Mammary epithelial cell (primary cell): ENCODE measurements at regions of chr17 and their contacts with region 1.

Region 1: DNA sequence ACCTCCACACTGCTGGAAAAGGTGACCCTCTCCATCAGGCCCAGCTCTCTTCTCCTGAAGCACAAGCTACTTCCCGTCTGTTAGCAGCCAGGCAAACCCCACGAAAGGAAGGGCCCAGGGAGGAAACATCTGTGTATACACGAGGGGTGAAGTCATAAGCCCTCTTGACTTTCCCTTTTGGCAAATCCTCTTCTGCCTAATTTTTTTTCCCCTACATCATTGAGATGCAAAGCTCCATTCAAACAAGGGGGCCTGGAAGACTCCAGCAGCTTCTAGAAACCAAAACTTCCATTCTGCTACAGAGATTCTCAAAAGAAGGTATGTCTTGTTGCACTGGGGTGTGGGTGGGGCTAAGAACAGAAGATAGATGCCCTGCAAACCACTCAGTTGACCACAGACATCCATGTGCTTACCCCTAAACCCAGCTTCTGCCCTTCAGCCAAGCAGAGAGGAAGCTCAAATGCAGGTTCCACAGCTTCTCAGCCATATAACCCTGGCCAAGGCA is 145.6 kb upstream of the RCVRN start:
- DNase-seq: no peak
- H3K4me3 ChIP-seq: no peak overlapping the region
- H3K27ac ChIP-seq: no peak overlapping the region
- H3K4me1 ChIP-seq: no peaks in the 10 kb centered on the region
- H3K27me3 ChIP-seq: no peaks in the 10 kb centered on the region
- CTCF ChIP-seq: no peak

Region 2: DNA sequence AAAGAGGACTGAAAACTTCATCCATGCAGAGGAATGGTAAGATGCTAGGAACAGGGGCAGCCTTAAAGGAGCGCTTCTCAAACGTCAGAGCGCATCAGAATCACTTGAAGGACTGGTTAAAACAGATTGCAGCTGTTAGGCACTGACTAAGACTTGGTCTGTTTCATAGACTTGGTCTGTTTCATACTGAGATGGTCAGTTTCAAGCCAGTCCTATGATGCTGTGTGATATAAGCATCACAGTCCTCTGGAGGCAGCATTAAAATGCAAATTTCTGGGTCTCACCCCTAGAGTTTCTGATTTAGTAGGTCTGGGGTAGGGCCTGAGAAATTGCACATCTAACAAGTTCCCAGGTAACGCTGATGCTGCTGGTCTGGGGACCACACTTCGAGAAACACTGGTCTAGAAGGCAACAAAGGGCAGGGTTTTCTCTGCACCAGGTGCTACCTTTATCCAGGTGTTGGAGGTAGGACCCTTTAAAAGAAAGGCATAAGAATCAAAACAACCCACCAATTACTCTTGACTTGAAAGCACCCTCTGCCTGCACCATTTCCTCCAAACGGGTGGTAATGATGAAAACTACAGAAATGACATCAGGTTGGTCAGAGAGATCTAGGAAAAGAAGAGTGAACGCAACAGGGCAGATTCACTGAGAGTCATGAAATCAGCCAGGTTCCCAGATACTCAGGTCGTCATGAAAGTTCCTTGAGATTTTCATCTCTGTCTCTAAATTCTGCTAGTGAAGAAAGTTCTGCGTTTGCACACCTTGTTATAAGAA is 50.5 kb before region 1 on chr17:
- CTCF ChIA-PET with region 1: no interaction called
- dilution Hi-C with region 1: no loop called
- in situ Hi-C with region 1: no loop called
- intact Hi-C with region 1: no loop called
- DNase-seq: no peak
- H3K4me3 ChIP-seq: no peak overlapping the region
- H3K27ac ChIP-seq: no peak overlapping the region
- H3K4me1 ChIP-seq: no peaks in the 10 kb centered on the region
- H3K27me3 ChIP-seq: no peaks in the 10 kb centered on the region
- CTCF ChIP-seq: no peak

Region 3: DNA sequence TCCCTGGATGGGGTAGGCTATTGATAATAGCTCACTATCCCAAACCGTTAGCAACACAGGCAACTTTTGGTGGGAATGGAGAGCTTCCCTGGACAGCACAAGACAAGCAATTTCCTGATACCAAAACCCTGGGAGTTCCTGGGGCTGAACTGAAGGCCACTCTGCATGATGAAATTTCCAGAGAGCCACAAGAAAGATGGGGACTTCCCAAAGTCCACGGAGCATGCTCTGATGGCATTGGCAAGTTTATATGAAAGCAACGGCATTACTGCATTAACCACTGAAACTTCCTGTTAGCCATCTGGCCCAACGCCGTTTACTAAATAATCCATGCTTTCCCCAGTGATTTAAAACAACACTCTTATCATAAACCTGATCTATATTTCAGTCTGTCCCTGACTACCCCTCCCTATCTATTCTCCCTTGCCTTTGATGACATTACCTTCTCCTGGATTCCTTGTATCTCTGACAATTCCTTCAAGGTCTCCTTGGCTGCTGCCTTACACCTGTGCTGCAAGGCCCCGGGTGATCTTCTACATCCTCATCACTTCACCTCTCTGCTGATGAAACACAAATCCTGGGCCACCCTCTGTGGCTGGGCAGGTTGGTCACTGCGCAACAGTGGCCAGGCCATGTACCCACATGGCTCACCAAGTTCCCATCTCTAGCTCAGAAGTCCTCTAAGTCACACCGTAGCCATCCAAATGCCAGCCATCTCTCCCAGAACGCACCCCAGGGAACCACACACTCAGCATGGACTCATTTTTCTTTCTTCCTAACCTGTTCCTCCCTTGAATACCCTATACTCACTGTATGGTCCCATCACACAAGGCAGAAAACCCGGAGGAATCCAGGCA is 37.1 kb before region 1 on chr17:
- CTCF ChIA-PET with region 1: no interaction called
- dilution Hi-C with region 1: loop called (anchors 5 kb)
- in situ Hi-C with region 1: no loop called
- intact Hi-C with region 1: no loop called
- DNase-seq: no peak
- H3K4me3 ChIP-seq: no peak overlapping the region
- H3K27ac ChIP-seq: no peak overlapping the region
- H3K4me1 ChIP-seq: no peaks in the 10 kb centered on the region
- H3K27me3 ChIP-seq: no peaks in the 10 kb centered on the region
- CTCF ChIP-seq: no peak